ENCODE measurements at regions of chr10 and their contacts with region 1.

Region 1: DNA sequence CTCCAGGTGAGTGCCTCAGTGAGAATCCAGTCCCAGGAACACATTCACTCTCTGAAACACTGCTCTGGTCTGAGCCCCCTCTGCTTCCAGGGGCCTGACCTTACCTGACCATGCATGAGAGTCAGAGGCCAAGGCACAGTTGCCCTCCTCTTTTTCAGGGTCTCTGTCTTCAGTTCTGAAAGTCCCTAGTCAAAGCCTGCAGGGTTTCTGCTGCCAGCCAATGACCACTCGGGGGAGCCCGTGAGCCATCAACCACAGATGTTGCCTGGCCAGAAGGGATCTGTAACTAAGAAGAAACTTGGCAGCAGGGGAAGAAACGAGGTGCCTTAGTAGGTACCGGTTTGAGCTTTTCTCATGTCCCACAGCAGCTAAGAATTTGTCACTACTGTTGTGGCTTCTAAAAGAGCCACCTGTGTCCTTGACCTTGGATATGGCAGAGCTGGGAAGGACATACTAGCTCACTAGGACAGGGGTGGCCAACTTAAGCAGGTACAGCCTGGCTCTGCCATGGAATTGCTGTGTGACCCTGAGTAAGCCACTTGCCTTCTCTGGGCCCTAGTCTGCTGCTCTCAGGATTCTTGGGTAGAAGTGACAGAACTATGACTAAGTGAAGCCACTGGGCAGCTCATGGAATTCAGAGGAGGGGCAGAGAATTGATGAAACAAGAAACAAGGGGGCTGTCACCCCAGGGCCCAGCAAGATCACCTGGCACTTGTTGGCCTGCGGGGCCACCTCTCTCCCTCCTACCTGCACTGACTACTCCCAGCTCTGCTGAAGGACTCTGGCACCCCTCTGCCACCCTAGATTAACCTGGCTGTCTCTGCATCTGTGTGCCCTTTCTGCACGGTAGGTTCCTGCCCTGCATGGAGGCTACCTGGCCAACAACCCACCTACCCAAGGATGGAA is 83.8 kb upstream of the GPR26 start:
- DNase-seq: peak; percentile 45
- ATAC-seq: peak; percentile 90
- H3K4me3 ChIP-seq: no peak overlapping the region
- H3K27ac ChIP-seq: no peak overlapping the region
- H3K4me1 ChIP-seq: no peaks in the 10 kb centered on the region
- H3K27me3 ChIP-seq: no peaks in the 10 kb centered on the region
- CTCF ChIP-seq: peak; percentile 68
- POLR2A ChIP-seq: no peak
- RAD21 ChIP-seq: peak; percentile 60

Region 2: GRCh38 chr10:123257904-123258456 is 324.4 kb before region 1 on chr10:
- CTCF ChIA-PET with region 1: no interaction called
- POLR2A ChIA-PET with region 1: no interaction called
- dilution Hi-C with region 1: no loop called
- in situ Hi-C with region 1: no loop called
- intact Hi-C with region 1: no loop called
- DNase-seq: no peak
- ATAC-seq: no peak
- H3K4me3 ChIP-seq: no peak overlapping the region
- H3K27ac ChIP-seq: no peak overlapping the region
- H3K4me1 ChIP-seq: no peaks in the 10 kb centered on the region
- H3K27me3 ChIP-seq: no peaks in the 10 kb centered on the region
- CTCF ChIP-seq: no peak
- POLR2A ChIP-seq: no peak
- RAD21 ChIP-seq: no peak

Region 3: DNA sequence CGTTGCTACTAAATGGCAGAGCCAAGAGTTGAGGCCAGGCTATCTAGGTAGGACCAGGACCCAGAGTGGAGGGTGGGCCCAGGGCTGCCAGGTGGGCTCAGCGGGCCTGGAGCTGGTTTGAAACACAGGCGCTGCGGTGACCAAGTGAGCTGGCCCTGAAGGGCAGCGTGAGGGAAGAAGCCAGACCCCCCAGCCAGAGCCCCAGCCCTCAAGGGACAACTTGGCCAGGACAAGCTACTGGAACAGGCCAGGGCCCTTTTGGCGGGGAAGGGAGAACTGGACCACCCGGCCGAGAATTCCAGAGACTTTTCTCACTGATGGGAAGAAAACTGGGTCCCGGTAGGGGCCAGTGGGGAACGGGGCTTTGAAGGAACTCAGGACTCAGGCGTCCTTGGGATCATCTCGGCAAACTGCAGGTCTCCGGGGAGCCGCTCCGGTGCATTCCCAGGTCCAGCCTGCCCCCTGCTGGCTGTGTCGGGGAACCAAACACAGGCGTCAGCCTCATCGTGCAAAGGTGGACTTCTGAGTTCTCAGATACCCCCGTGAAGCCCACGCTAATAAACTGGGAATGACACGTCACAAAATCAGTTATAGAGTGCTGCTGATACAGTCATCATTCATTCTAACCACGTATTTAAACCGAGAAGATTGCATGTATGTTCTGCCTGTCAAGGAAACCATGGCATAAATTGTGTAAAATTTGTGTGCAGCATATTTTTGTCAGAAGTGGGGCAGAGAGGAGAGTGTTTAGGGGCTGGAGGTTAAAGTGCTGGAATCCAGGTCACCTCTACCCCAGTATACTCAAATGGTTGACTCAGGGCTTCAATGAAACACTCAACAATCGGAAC is 385.3 kb after region 1 on chr10:
- CTCF ChIA-PET with region 1: no interaction called
- POLR2A ChIA-PET with region 1: no interaction called
- dilution Hi-C with region 1: no loop called
- in situ Hi-C with region 1: loop called (anchors 10 kb)
- intact Hi-C with region 1: no loop called
- DNase-seq: peak; percentile 11
- ATAC-seq: peak; percentile 65
- H3K4me3 ChIP-seq: no peak overlapping the region
- H3K27ac ChIP-seq: no peak overlapping the region
- H3K4me1 ChIP-seq: no peaks in the 10 kb centered on the region
- H3K27me3 ChIP-seq: no peaks in the 10 kb centered on the region
- CTCF ChIP-seq: peak; percentile 53
- POLR2A ChIP-seq: no peak
- RAD21 ChIP-seq: peak; percentile 63

Region 4: DNA sequence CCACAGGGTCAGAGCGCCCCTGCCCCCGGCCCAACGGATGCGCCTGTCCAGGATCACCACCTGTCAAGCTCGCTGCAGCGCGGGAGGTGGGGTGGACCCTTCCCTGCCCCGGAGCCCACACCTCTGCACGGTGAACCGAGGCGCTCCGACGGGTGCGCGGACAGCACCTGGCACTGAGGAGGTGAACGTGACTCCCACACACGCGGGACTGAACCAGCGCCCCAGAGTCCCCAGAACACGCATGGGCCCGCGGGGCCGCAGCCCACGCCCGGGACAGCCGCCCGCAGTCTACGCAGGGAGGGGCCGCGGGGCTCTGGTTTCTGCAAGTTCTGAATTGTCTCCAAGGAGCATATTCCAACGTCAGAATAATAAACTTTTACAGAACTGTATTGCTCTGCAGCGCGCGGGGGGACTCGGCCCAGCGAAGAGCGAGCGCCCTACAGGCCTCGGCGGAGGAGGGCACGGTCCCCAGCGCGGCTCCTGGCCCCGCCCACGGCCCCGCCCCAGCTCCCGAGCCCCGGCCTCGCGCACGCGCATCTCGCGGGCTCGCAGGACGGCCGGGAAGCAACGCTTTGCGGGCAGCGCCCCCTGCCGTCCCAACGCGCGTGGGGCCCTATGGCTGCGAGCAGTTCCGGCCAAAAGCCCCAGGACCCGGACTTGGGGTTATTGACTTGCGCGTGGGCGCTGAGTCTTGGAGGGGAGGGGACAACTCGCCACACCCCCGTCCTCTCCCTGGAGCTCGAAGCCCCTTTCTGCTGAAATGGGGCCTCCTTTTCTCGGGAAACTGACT is 806.7 kb after region 1 on chr10:
- CTCF ChIA-PET with region 1: interaction called, 3 read pairs
- POLR2A ChIA-PET with region 1: no interaction called
- dilution Hi-C with region 1: no loop called
- in situ Hi-C with region 1: loop called (anchors 10 kb)
- intact Hi-C with region 1: loop called (anchors 1 kb)
- DNase-seq: peak; percentile 71
- ATAC-seq: peak; percentile 99
- H3K4me3 ChIP-seq: peak overlapping the region; percentile 26; the same call in 1 of the 2 replicates
- H3K27ac ChIP-seq: no peak overlapping the region
- H3K4me1 ChIP-seq: no peaks in the 10 kb centered on the region
- H3K27me3 ChIP-seq: no peaks in the 10 kb centered on the region; the same call in 1 of the 2 replicates
- CTCF ChIP-seq: peak; percentile 97
- POLR2A ChIP-seq: no peak
- RAD21 ChIP-seq: peak; percentile 92

Measured in IMR-90 (cell line).